Right ventricle myocardium inferior (tissue), 1 donor: ENCODE measurements at regions of chr5 and their contacts with region 1.

Region 1: GRCh38 chr5:116442095-116442534 is 132.5 kb downstream of the SEMA6A start:
- DNase-seq: no peak
- ATAC-seq: peak; percentile 58

Region 2: DNA sequence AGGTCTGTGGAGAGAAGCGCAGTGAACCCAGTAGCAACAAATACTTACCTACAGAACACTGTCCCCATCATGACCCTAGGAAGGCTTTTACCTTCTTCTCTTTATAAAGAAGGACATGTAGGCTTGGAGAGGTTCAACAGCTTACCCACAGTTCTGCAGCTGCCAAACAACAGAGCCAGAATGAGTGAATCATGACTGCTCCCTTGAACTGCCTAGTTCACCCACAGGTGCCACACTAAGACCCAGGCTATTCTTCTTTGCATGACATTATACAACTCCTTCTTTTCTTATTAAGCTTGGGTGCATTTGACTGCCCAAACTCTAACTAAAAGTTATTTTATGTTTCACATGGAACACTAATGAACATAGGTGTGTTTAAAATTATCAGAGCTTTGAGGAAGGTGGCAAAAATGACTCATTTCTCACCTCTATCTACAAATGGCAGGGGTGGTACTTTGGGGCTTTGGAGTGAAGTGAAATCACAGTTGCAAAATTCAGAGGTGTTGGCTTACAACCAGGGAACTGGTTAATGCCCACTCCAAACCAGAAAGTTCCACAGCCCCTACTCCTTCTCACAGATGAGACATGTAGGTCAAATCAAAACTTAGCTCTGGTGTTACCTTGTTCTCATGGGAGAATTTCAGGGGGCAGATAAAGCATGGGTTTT is 69.1 kb before region 1 on chr5:
- intact Hi-C with region 1: loop called (anchors 1 kb)
- DNase-seq: no peak
- ATAC-seq: no peak

Region 3: DNA sequence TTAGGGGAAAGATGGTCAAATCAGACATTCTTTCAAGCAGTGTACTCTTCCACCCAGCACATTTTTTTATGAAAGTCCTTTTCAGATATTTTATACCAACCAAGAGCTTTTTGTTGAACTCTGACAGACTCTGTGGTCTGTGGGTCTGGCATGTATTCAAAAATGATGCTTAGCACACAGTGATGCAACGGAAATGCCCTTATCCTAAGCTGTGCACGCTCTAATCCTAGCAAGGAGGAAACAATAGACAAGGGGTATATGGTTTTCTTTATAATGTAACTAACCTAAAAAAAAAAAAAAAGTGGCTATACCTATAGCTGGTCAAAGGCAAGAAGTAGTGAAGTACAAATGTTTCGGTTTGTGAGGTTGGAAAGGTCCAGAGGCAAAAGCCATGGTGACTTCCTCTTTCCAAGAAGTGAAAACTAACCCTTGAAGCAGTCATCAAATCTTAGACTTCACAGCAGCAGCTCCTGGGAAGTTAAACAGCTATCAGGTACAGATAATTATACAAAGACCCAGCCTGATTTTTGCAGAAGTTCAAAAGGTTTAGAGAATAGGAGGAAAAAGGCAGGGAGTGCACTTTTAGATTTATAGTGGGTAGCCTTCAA is 50.0 kb after region 1 on chr5:
- intact Hi-C with region 1: loop called (anchors 5 kb)
- DNase-seq: no peak
- ATAC-seq: peak; percentile 45

Region 4: GRCh38 chr5:116671211-116671736 is 229.2 kb after region 1 on chr5:
- intact Hi-C with region 1: no loop called
- DNase-seq: no peak
- ATAC-seq: no peak

Region 5: DNA sequence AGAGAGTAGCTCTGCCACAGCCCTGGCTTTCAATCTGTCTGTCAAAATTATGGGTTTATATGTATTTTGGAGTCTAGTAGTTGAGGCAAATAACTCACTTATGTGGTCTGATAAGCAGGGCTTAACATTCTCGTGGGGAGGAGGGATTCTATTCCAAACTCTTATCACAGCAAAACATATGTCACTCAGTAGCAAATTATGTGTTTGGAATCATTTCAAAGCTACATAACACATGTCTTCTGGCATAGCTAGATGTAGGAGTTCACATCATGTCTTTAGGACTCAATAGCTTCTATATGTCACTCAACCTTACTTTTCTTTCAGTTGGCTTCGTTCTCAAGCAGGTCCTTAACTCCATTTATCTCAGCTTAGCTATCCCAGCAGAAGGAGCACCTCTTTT is 277.0 kb after region 1 on chr5:
- intact Hi-C with region 1: no loop called
- DNase-seq: no peak
- ATAC-seq: no peak